Activated T-helper 1 cell treated with anti-CD3 and anti-CD28 coated beads, Interleukin-12 subunit alpha, Interleukin-12 subunit beta, Interleukin-2, Interleukin-4 antibody, amounts not matched to agents 30 ng/mL and 10 ng/mL and 1 ng/mL, durations not matched to agents 14 hours and 24 hours and 36 hours (primary cell): ENCODE measurements at regions of chr19 and their contacts with region 1.

Region 1: DNA sequence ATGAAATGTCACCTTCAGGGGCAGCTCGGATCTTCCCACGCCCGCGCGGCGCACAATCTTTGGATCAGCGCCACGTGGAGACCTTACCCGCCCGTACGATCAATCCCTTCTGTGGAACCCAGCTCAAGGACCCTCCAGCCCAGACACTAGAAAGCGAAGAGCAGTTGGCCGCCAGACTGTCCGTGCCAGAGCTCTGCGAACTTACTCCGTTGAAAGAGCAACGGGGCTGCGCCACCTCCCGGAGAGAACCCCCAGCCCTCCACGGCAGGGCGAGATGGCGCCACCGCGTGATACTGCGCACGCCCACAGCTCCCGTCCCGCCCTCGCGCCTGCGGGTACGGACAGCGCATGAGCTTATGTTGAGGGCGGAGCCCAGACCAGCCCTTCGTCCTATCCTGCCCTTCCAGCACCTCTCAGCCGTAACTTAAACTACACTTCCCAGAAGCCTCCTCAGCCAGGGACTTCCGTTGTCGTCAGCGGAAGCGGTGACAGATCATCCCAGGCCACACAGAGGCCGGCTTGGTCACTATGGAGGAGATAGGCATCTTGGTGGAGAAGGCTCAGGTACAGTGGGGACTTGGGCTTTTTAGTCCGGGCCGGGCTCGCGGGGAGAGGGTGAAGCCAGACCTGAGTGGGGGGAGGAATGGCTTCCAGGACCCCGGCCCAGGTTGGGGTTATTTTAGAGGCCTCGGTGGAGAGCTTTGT is at the start of gene PSMC4:
- DNase-seq: peak; percentile 99
- H3K4me3 Mint-ChIP-seq: peak within 1 kb of the TSS; percentile 95
- H3K27ac Mint-ChIP-seq: peak within 1 kb of the TSS; percentile 97
- H3K4me1 Mint-ChIP-seq: peaks cover 54% of the 10 kb centered on the region
- H3K27me3 Mint-ChIP-seq: no peaks in the 10 kb centered on the region
- total RNA-seq, gene PSMC4: 189 and 190 TPM in 2 replicates

Region 2: GRCh38 chr19:39390755-39391592 is 579.9 kb before region 1 on chr19 and contains the starts of genes MED29 and PAF1:
- intact Hi-C with region 1: loop called (anchors 5 kb)
- DNase-seq: peak; percentile 95
- H3K4me3 Mint-ChIP-seq: peak within 1 kb of the TSS; percentile 98
- H3K27ac Mint-ChIP-seq: peak within 1 kb of the TSS; percentile 93
- H3K4me1 Mint-ChIP-seq: peaks cover 31% of the 10 kb centered on the region
- H3K27me3 Mint-ChIP-seq: no peaks in the 10 kb centered on the region
- total RNA-seq, gene MED29: 37.5 and 45.8 TPM in 2 replicates
- total RNA-seq, gene PAF1: 54.8 and 57.3 TPM in 2 replicates

Region 3: DNA sequence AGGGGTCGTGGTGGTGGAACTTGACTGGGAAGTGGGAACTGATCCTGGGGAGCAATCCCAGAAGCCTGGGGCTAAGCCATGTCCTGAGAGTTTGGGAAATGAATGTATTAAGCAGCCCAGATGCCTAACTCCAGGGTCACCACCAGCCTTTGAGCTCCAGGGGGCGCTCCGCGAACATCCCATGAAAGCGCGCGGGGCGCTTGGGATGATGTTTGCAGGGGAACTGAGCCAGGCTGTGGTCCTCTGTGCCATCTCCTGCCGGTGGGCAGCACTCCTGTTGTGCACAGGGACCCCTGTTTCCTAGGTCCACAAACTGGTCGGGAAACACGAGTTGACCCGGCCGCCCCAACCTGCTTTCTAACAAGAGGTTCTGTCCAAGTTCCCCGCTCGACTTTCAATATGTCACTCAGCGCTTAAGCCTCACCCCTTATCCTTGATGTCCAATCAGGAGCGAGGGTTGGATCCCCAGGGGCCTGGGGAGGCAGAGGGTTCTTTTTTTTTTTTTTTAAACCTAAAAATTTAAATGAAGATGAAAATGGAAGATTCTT is 177.8 kb before region 1 on chr19:
- intact Hi-C with region 1: loop called (anchors 1 kb)
- DNase-seq: peak; percentile 61
- H3K4me3 Mint-ChIP-seq: peak overlapping the region; percentile 77
- H3K27ac Mint-ChIP-seq: no peak overlapping the region
- H3K4me1 Mint-ChIP-seq: peaks cover 5% of the 10 kb centered on the region
- H3K27me3 Mint-ChIP-seq: peaks cover 3% of the 10 kb centered on the region

Region 4: GRCh38 chr19:39846176-39846677 is 124.6 kb before region 1 on chr19 and contains the start of gene FBL:
- intact Hi-C with region 1: loop called (anchors 2 kb)
- DNase-seq: peak; percentile 97
- H3K4me3 Mint-ChIP-seq: peak within 1 kb of the TSS; percentile 94
- H3K27ac Mint-ChIP-seq: peak within 1 kb of the TSS; percentile 95
- H3K4me1 Mint-ChIP-seq: peaks cover 46% of the 10 kb centered on the region
- H3K27me3 Mint-ChIP-seq: peaks cover 3% of the 10 kb centered on the region
- total RNA-seq, gene FBL: 526 and 528 TPM in 2 replicates

Region 5: GRCh38 chr19:39951686-39952085 is 19.1 kb before region 1 on chr19:
- intact Hi-C with region 1: loop called (anchors 1 kb)
- DNase-seq: no peak
- H3K4me3 Mint-ChIP-seq: peak overlapping the region; percentile 68
- H3K27ac Mint-ChIP-seq: peak overlapping the region; percentile 76
- H3K4me1 Mint-ChIP-seq: peaks cover 62% of the 10 kb centered on the region
- H3K27me3 Mint-ChIP-seq: peaks cover 3% of the 10 kb centered on the region

Region 6: GRCh38 chr19:40190891-40191835 is 220.3 kb after region 1 on chr19 and contains the start of gene MAP3K10:
- intact Hi-C with region 1: loop called (anchors 2 kb)
- DNase-seq: peak; percentile 73
- H3K4me3 Mint-ChIP-seq: peak within 1 kb of the TSS; percentile 90
- H3K27ac Mint-ChIP-seq: peak within 1 kb of the TSS; percentile 93
- H3K4me1 Mint-ChIP-seq: peaks cover 34% of the 10 kb centered on the region
- H3K27me3 Mint-ChIP-seq: peaks cover 8% of the 10 kb centered on the region
- total RNA-seq, gene MAP3K10: 13.8 and 19.8 TPM in 2 replicates